H1 (cell line): ENCODE measurements at regions of chr16 and their contacts with region 1.

Region 1: GRCh38 chr16:67822511-67822910 is 15.8 kb downstream of the TSNAXIP1 start:
- DNase-seq: no peak
- H3K4me3 ChIP-seq: no peak overlapping the region
- H3K27ac ChIP-seq: no peak overlapping the region
- H3K4me1 ChIP-seq: peaks cover 0 to 2% (median 0%) of the 10 kb centered on the region in 4 experiments; a peak in 3 of 7 replicates
- H3K27me3 ChIP-seq: no peaks in the 10 kb centered on the region; a peak in 1 of 7 replicates
- CTCF ChIP-seq: no peak
- EP300 ChIP-seq: no peak
- POLR2A ChIP-seq: no peak
- RAD21 ChIP-seq: no peak

Region 2: GRCh38 chr16:67833418-67834241 is 11.1 kb after region 1 on chr16:
- CTCF ChIA-PET with region 1: interaction called, 100 read pairs
- POLR2A ChIA-PET with region 1: interaction called, 15 read pairs
- DNase-seq: peak in 1 of 2 experiments; percentile 97
- H3K4me3 ChIP-seq: peak overlapping the region; percentile 62 to 78 (median 74)
- H3K27ac ChIP-seq: no peak overlapping the region
- H3K4me1 ChIP-seq: no peaks in the 10 kb centered on the region; a peak in 1 of 7 replicates
- H3K27me3 ChIP-seq: no peaks in the 10 kb centered on the region
- CTCF ChIP-seq: peak in 1 of 3 experiments; percentile 7; a peak in 1 of 4 replicates
- EP300 ChIP-seq: no peak
- POLR2A ChIP-seq: peak in 1 of 2 experiments; percentile 84; a peak in 2 of 3 replicates
- RAD21 ChIP-seq: no peak